Right ventricle myocardium inferior (tissue), 1 donor: ENCODE measurements at regions of chr17 and their contacts with region 1.

Region 1: DNA sequence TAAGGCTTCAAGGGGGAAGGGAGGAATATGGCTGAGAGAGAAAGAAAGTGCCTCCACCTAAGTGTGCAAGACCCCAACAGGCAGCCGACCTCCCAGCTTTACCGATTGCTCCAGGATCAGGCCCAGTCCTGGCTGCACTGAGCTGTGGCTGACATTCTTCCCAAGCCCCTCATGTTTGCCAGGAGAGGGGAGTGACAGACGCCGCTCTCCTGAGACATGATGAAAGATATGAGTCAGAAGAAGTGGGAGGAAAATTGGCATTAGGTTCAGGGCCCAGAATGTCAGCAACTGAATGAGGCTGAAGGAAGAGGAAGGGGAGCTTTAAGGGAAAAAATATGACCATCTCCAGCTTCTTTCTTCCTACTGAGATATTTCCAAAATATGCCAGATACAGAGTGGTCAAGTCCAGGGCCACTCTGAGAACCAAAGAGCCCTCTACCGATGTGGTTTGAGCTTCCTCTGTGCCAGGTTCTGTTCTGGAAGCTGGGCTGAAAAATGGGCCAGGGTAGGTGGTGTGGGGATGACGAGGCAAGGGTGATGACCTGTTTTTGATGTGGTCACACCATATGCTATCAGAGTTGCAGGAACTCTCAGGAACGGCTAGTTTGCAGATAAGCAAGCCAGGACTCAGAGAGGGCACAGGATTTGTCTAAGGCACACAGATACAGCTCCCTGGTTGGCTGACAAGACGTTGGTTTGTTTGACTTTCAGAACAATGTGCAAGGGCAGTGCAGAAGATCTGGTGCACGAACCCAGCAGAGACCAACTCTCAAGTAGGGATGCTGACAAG is 176.7 kb downstream of the SOX9 start:
- DNase-seq: no peak
- ATAC-seq: peak; percentile 62

Region 2: GRCh38 chr17:72004611-72005331 is 292.8 kb before region 1 on chr17:
- intact Hi-C with region 1: no loop called
- DNase-seq: no peak
- ATAC-seq: no peak

Region 3: DNA sequence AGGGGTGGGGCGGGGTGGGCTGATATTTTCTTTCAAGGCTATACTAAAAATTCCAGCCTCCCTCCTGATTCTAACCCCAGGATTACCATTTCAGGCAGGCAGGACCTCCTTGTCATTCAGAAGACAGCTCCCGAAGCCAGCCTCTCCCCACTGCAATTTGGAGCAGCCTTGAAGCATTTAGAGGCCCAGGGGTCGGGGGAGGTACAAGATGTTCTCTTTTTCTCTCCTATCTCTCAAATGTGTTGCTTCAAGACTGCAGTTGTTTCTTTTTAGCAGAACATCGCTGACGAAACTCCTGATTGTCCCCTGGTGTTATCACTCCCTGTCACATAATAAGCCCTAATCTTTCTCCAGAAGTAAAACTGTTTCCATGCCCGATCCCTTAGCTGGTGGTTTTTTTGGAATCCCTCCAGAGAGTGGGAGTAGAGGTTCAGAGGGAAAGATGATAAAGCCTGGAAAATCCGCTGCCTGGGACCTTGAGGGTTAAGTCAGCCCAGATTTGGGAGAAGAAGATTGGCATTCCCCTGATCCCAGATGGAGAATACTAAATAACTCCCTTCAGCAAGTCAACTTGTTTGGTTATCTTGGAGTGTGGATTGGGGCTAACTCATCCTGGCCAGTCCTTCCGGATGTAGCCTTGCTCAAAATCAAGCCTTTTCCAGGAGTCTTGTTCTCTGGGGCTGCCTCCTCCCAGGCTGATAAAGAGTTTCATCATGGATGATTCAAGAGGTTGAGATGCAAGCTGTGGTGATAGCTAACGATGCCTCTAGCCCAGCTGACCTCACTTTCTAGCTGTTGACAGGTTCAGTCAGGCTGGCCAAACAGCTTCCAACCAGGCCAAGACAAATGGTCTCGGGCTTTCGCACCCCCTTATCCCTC is 105.4 kb before region 1 on chr17:
- intact Hi-C with region 1: loop called (anchors 10 kb)
- DNase-seq: no peak
- ATAC-seq: peak; percentile 88

Region 4: DNA sequence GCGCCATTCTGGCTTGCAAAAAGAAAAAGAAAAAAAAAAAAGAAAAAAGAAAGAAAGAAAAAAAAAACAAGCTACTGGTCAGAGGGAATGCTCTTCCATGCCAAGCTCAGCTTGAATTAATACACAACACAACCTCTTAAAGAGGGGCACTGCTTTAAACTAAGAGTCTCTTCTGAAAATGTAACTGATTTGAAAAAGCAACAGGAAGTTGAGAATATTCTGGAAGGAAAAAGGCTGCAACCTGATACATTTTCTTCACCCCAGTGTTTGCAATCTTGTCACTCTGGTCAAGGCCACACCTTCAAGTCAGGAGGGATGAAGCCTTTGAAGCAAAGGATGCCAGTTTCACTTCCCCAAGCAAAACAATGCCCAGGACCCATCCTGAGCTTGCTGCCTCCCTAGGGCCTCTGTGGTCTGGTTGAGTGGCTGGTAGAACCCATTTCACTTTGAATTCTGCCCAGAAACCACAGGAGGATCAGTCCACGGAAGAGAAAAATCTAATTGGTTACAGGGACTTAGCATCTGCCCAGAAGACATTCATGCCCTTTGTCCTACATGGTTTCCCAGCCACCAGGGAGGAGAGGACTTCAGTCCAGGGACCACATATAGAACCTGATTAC is 213.0 kb after region 1 on chr17:
- intact Hi-C with region 1: loop called (anchors 10 kb)
- DNase-seq: no peak
- ATAC-seq: no peak